Posterior vena cava (tissue), 2 donors: ENCODE measurements at regions of chr21 and their contacts with region 1.

Region 1: GRCh38 chr21:26783466-26784195 is 61.6 kb downstream of the ADAMTS1 start:
- DNase-seq: no peak

Region 2: DNA sequence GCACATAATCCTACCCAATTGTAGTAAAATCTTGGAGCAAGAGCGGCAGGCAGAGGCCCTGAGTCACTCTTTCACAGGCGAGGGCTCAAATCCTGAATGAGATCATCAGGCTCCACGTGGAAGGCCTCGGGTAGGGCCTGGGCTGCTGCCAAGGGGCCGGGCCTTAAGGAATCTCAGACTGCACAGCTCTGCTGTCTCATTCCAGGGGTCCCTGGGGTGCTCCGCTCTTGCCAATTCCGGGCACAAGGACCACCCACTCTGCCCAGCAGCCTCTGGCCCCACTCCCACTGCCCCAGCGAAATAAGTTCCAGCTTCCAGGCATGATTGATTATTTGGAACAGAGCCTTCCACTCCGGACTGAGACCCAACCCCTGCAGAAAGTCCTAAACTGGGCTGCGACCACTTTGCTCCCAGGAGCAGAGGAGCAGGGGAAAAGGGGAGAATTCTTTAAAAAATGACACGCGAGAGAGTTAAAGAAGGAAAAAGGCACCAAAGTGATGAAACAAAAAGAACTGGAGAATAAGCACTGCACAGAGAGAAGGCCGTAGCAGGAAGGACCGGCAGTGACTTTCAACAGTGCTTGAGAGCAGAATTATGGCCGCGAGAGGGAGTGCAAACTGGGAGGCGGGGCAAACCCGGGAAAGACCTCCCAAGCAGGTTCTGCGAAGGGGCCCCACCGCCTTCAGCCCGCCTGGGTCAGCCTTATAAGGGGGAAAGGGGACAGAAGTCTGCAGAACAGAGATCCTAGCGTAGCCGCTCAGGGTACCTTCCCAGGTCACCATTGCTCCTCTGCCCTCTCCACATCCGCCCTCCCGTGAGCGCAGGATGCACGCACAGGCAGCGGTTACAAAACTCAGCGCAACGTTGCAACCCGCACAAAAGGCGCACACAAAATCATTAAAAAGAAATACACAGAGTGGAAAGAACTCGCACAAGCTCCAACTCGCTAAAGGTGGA is 59.6 kb after region 1 on chr21:
- intact Hi-C with region 1: loop called (anchors 5 to 10 kb)
- DNase-seq: peak; percentile 97

Region 3: GRCh38 chr21:26865857-26866256 is 82.2 kb after region 1 on chr21:
- intact Hi-C with region 1: no loop called
- DNase-seq: no peak